GM18951 (cell line): ENCODE measurements at regions of chr15 and their contacts with region 1.

Region 1: DNA sequence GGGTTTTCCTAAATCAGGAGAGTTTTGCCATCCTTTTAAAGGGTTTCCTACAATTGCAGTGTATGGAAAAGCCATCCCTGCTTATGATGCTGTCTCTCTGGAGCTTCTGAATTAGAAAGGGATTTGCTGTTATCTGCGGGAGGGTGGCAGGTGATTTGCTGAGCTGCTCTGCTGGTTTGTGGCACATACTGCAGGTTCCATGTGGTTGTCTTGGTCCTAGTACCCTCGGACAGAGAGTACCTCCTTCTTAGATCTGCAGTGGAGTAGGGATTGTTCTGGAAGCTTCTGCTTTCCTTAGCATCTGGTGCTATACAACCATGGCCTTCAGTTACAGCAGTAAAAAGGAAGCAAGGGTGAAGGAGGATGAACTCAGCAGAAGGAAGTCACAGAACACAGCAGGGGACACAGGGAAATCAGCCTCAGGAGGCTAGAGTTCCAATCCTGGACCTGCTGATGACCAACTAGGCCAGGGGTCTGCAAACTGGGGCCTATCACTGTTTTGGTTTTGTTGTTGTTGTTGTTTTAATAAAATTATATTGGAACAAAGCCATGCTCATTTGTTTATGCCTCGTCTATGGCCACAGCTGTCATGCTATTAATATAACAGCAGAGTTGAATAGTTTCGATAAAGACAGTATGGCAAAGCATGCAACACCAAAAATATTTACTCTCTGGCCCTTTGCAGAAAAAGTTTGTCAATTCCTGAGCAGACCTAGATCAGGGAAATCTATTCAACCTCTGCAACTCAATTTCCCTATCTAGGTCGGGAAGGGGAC is 39.5 kb downstream of the STARD5 start:
- POLR2A ChIP-seq: no peak

Region 2: GRCh38 chr15:81334768-81335435 is 50.5 kb after region 1 on chr15:
- in situ Hi-C with region 1: loop called (anchors 5 kb)
- POLR2A ChIP-seq: no peak